ENCODE measurements at regions of chr3 and their contacts with region 1.

Region 1: GRCh38 chr3:51384726-51385473 is at the start of gene MANF:
- DNase-seq: peak; percentile 87 to 98 (median 98)
- ATAC-seq: peak; percentile 97
- H3K4me3 ChIP-seq: peak within 1 kb of the TSS; percentile 92
- H3K4me3 Mint-ChIP-seq: peak within 1 kb of the TSS; percentile 89 to 99 (median 98)
- H3K27ac ChIP-seq: peak within 1 kb of the TSS; percentile 98
- H3K27ac Mint-ChIP-seq: peak within 1 kb of the TSS; percentile 98 to 99 (median 99)
- H3K4me1 ChIP-seq: peaks cover 22 to 31% of the 10 kb centered on the region in 2 donors
- H3K4me1 Mint-ChIP-seq: peaks cover 32 to 48% (median 46%) of the 10 kb centered on the region in 7 donors
- H3K27me3 ChIP-seq: no peaks in the 10 kb centered on the region
- H3K27me3 Mint-ChIP-seq: no peaks in the 10 kb centered on the region
- total RNA-seq, gene MANF: 28.2 to 182 (median 68.0) TPM

Region 2: DNA sequence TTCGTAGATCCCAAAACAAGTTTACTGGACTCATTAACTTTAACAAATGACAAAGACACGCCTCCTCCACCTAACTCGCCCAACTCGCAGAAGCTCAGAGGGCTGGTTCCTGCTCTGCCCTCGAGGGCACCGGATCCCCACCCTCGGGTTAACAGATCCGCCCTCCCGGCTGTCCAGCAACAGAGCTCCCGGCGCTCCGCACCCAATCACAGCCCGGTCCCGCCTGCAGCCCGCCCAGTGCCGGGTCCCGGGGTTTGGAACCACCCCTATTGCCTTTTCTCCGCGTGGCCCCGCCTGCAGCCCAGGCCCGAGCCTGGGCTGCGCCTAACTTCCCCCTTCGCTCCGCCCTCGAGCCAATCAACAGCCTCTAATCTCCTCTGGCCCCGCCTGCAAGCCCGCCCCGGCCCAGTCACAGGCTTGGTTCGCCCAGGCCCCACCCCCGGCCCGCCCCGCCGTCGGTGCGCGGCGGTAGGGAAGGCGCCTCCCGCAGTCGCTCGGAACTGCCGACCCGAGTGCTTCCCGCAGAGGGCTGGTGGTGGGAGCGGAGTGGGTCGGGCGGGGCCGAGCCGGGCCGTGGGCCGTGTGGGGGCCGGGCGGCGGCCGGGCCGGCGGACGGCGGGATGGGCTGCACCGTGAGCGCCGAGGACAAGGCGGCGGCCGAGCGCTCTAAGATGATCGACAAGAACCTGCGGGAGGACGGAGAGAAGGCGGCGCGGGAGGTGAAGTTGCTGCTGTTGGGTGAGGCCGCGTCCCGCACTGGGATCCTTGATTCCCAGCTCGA is 1149.0 kb before region 1 on chr3 and contains the start of gene GNAI2:
- CTCF ChIA-PET with region 1: no interaction called
- POLR2A ChIA-PET with region 1: interaction called, 3 read pairs
- intact Hi-C with region 1: loop called in 1 of 2 experiments (anchors 5 kb)
- DNase-seq: peak; percentile 95 to 99 (median 99)
- ATAC-seq: peak; percentile 93
- H3K4me3 ChIP-seq: peak within 1 kb of the TSS; percentile 90
- H3K4me3 Mint-ChIP-seq: peak within 1 kb of the TSS; percentile 92 to 99 (median 98)
- H3K27ac ChIP-seq: peak within 1 kb of the TSS; percentile 84
- H3K27ac Mint-ChIP-seq: peak within 1 kb of the TSS; percentile 87 to 97 (median 95)
- H3K4me1 ChIP-seq: peaks cover 30 to 35% of the 10 kb centered on the region in 2 donors
- H3K4me1 Mint-ChIP-seq: peaks cover 12 to 41% (median 37%) of the 10 kb centered on the region in 7 donors
- H3K27me3 ChIP-seq: no peaks in the 10 kb centered on the region
- H3K27me3 Mint-ChIP-seq: no peaks in the 10 kb centered on the region
- total RNA-seq, gene GNAI2: 225 to 442 (median 282) TPM

Region 3: GRCh38 chr3:50365080-50365841 is 1019.6 kb before region 1 on chr3:
- CTCF ChIA-PET with region 1: no interaction called
- POLR2A ChIA-PET with region 1: interaction called, 4 read pairs
- intact Hi-C with region 1: loop called in 1 of 2 experiments (anchors 2 kb)
- DNase-seq: peak; percentile 82 to 96 (median 94)
- ATAC-seq: peak; percentile 97
- H3K4me3 ChIP-seq: peak overlapping the region; percentile 99
- H3K4me3 Mint-ChIP-seq: peak overlapping the region; percentile 82 to 93 (median 90)
- H3K27ac ChIP-seq: peak overlapping the region; percentile 95
- H3K27ac Mint-ChIP-seq: peak overlapping the region; percentile 87 to 97 (median 94)
- H3K4me1 ChIP-seq: peaks cover 13 to 18% of the 10 kb centered on the region in 2 donors
- H3K4me1 Mint-ChIP-seq: peaks cover 8 to 36% (median 20%) of the 10 kb centered on the region in 7 donors
- H3K27me3 ChIP-seq: no peaks in the 10 kb centered on the region
- H3K27me3 Mint-ChIP-seq: no peaks in the 10 kb centered on the region

Region 4: GRCh38 chr3:51024765-51025632 is 359.9 kb before region 1 on chr3:
- CTCF ChIA-PET with region 1: no interaction called
- POLR2A ChIA-PET with region 1: interaction called, 13 read pairs
- intact Hi-C with region 1: loop called in 1 of 2 experiments (anchors 1 kb)
- DNase-seq: peak; percentile 34 to 88 (median 81)
- ATAC-seq: peak; percentile 96
- H3K4me3 ChIP-seq: peak overlapping the region; percentile 55
- H3K4me3 Mint-ChIP-seq: peak overlapping the region; percentile 66 to 89 (median 78)
- H3K27ac ChIP-seq: peak overlapping the region; percentile 70
- H3K27ac Mint-ChIP-seq: peak overlapping the region; percentile 81 to 98 (median 96)
- H3K4me1 ChIP-seq: peaks cover 36 to 41% of the 10 kb centered on the region in 2 donors
- H3K4me1 Mint-ChIP-seq: peaks cover 27 to 72% (median 69%) of the 10 kb centered on the region in 7 donors
- H3K27me3 ChIP-seq: no peaks in the 10 kb centered on the region
- H3K27me3 Mint-ChIP-seq: peaks cover 0 to 8% (median 0%) of the 10 kb centered on the region in 5 donors

Region 5: GRCh38 chr3:51498876-51499738 is 114.2 kb after region 1 on chr3:
- CTCF ChIA-PET with region 1: interaction called, 4 read pairs
- POLR2A ChIA-PET with region 1: interaction called, 17 read pairs
- intact Hi-C with region 1: loop called (anchors 1 kb)
- DNase-seq: peak; percentile 52 to 90 (median 73)
- ATAC-seq: peak; percentile 58
- H3K4me3 ChIP-seq: peak overlapping the region; percentile 84
- H3K4me3 Mint-ChIP-seq: peak overlapping the region; percentile 87 to 100 (median 98)
- H3K27ac ChIP-seq: peak overlapping the region; percentile 90
- H3K27ac Mint-ChIP-seq: peak overlapping the region; percentile 90 to 99 (median 94)
- H3K4me1 ChIP-seq: peaks cover 10 to 14% of the 10 kb centered on the region in 2 donors
- H3K4me1 Mint-ChIP-seq: peaks cover 4 to 38% (median 35%) of the 10 kb centered on the region in 7 donors
- H3K27me3 ChIP-seq: no peaks in the 10 kb centered on the region
- H3K27me3 Mint-ChIP-seq: peaks cover 0 to 2% (median 0%) of the 10 kb centered on the region in 5 donors

Region 6: GRCh38 chr3:51830345-51830744 is 445.4 kb after region 1 on chr3:
- CTCF ChIA-PET with region 1: no interaction called
- POLR2A ChIA-PET with region 1: no interaction called
- intact Hi-C with region 1: no loop called
- DNase-seq: no peak
- ATAC-seq: no peak
- H3K4me3 ChIP-seq: no peak overlapping the region
- H3K4me3 Mint-ChIP-seq: no peak overlapping the region
- H3K27ac ChIP-seq: no peak overlapping the region
- H3K27ac Mint-ChIP-seq: no peak overlapping the region
- H3K4me1 ChIP-seq: no peaks in the 10 kb centered on the region
- H3K4me1 Mint-ChIP-seq: peaks cover 0 to 2% (median 0%) of the 10 kb centered on the region in 7 donors
- H3K27me3 ChIP-seq: peaks cover 0 to 4% of the 10 kb centered on the region in 2 donors
- H3K27me3 Mint-ChIP-seq: peaks cover 25 to 39% (median 35%) of the 10 kb centered on the region in 5 donors

Region 7: DNA sequence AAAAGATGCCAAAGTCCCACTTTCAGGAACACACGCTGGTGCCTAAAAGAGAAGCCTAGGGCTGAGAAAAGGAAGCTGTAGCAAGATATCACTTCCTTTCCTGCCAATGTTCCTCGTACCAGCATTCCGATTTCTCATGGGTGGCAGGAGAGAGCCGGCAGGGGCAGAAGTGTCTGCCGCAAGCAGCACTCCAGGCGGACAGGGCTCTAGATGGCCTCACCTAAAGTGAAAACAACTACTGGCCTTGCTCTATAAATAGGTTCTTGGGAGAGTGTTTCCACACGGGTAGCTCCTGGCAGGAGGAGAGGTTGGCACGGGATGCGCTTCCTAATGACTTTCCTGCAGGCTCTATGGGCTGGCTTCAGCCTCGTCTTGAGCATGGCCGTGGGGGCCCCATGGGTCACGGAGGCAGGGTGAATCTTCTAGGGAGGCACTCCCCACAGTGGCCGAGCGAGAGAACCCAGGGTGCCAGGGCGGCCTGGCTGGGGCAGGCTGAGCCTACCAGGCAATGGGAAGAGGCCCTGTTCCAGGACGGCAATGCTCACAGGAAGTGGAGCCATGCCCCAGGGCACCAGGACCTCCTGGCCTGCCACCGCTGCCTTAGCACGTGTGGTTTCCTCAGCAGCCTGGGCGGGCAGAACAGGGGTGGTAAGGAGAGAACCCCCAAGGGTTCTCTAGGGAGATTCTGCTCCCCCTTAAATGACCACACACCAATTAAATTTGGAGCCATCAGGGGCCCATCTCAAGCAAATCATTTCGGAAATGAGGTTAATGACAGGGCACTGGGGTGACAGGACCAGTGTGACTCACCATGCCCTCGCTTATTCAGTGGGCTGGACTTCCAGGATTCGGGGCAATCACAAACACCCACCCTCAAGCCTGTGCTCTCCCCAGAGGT is 686.1 kb after region 1 on chr3:
- CTCF ChIA-PET with region 1: no interaction called
- POLR2A ChIA-PET with region 1: no interaction called
- intact Hi-C with region 1: no loop called
- DNase-seq: no peak
- ATAC-seq: peak; percentile 50
- H3K4me3 ChIP-seq: no peak overlapping the region
- H3K4me3 Mint-ChIP-seq: no peak overlapping the region
- H3K27ac ChIP-seq: no peak overlapping the region
- H3K27ac Mint-ChIP-seq: peak overlapping the region in 2 of 9 donors; percentile 5 to 9
- H3K4me1 ChIP-seq: no peaks in the 10 kb centered on the region
- H3K4me1 Mint-ChIP-seq: peaks cover 0 to 3% (median 0%) of the 10 kb centered on the region in 7 donors
- H3K27me3 ChIP-seq: no peaks in the 10 kb centered on the region
- H3K27me3 Mint-ChIP-seq: no peaks in the 10 kb centered on the region

Region 8: DNA sequence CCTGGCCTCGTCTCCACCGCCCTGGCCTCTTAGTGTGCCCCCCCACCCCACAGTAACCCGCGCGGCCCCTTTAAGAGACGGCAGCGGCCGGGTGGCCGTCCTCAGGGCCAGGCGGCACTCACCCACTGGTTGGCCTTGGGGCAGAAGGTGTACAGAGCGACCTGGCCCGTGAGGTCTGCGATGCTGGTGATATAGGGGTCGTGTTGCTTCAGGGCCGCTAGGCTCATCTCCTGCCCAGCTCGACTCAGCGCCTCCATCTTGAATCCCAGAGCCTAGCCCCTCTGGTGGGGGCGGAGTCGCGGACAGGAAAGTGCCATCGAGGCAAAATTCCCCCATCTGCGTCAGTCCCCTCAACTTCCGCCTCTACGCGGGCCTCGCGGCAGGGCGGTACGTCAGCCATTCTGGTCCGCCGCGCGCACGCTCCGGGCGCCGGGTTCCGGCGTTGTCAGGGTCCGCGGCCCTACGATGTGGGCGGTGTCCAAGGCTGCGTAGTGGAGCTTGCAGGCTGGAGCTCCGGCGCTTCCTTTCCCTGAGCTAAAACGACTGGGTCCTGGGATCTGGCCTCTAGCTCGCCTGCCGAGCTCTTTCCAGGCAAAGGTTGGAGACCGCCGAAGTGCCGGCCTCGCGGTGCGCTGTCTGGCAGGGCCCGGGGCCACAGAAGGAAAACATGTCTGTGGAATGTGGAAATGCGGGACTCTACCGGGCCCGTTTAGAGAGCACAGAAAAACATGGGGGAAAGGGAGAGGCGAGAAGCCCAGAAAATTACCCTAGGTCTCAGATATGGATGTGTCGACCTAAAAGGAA is 1962.6 kb after region 1 on chr3 and contains the start of gene DCP1A:
- CTCF ChIA-PET with region 1: no interaction called
- POLR2A ChIA-PET with region 1: no interaction called
- intact Hi-C with region 1: loop called in 1 of 2 experiments (anchors 10 kb)
- DNase-seq: peak; percentile 93 to 98 (median 96)
- ATAC-seq: peak; percentile 96
- H3K4me3 ChIP-seq: peak within 1 kb of the TSS; percentile 93
- H3K4me3 Mint-ChIP-seq: peak within 1 kb of the TSS; percentile 96 to 99 (median 99)
- H3K27ac ChIP-seq: peak within 1 kb of the TSS; percentile 98
- H3K27ac Mint-ChIP-seq: peak within 1 kb of the TSS; percentile 98 to 100 (median 99)
- H3K4me1 ChIP-seq: peaks cover 6 to 21% of the 10 kb centered on the region in 2 donors
- H3K4me1 Mint-ChIP-seq: peaks cover 13 to 58% (median 42%) of the 10 kb centered on the region in 7 donors
- H3K27me3 ChIP-seq: no peaks in the 10 kb centered on the region
- H3K27me3 Mint-ChIP-seq: no peaks in the 10 kb centered on the region
- total RNA-seq, gene DCP1A: 34.0 to 51.3 (median 40.1) TPM